Right cardiac atrium (tissue), 5 donors: ENCODE measurements at regions of chr1 and their contacts with region 1.

Region 1: DNA sequence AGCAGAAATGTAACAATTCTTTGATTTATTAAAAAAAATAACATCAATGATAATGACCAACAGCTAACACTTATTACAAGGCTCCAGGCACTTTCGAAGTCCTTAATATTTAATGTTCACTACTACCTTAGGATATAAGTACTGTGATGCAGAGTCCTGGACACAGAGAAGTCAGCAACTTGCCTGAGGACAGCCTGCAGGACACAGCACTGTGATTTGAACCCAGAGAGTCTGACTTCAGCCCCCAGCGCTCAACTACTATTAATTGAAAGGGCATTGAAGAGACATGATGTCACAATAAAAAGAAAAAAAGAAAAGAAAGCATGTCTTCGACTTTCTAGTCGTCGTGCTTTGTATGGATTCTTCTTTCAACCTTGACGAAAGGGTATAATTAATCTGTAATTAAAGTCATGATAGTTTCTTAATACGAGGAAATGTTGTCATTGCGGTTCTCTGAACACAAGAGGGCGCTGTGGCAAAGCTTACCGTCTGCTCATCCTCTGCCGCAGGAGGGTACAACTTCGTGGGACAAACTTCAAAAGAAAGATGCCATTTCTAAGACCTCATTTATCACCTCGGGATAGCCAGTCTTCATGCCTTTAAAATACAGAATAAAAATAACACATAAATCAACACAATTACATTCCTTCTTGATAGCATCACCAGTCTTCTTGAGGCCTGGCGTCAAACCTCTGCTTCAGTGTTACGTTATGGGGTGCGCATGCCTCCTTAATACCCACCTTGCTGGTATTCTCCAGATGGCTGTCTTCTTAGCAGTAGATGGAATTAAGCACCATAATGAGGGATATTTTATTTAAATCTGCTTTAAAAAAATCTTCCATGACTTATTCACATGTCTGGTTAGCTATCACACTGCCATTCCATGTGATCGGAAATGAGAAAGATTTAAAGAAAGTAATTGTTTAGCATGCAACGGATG is 240.1 kb downstream of the DISC1 start:
- DNase-seq: peak; percentile 50 to 73 (median 72)
- ATAC-seq: peak; percentile 32 to 54
- H3K4me3 ChIP-seq: no peak overlapping the region
- H3K27ac ChIP-seq: no peak overlapping the region
- H3K4me1 ChIP-seq: peaks cover 7% of the 10 kb centered on the region
- H3K27me3 ChIP-seq: no peaks in the 10 kb centered on the region

Region 2: DNA sequence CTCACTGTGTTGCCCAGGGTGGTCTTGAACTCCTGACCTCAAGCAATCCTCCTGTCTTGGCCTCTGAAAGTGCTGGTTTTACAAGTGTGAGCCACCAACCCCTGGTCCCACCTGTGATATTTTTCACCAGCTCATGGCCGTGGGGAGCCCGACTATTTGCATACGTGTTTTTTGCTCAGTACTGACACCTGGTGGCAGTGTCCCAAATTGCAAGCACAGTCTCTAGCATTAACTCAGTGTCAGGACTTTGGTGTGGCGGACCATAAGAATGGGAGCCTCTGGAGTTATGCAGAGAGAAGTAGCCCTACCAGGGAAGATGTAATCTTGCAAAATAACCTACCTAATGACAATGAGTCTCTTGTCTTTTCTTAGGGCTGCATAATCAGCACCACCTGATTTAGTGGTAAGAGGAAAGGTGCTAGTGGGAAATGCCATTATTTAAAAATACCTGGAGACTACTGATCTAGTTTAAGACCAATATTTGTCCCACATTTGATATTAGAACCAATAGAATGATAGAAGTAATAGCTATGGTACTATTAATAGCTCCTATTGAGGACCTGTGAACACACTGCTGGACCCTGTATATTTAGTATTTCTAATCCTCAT is 65.3 kb after region 1 on chr1:
- intact Hi-C with region 1: loop called in 2 of 4 experiments (anchors 10 kb)
- DNase-seq: no peak
- ATAC-seq: no peak
- H3K4me3 ChIP-seq: no peak overlapping the region
- H3K27ac ChIP-seq: no peak overlapping the region
- H3K4me1 ChIP-seq: peaks cover 44% of the 10 kb centered on the region
- H3K27me3 ChIP-seq: no peaks in the 10 kb centered on the region

Region 3: GRCh38 chr1:231986631-231987551 is 120.2 kb after region 1 on chr1:
- intact Hi-C with region 1: loop called in 1 of 4 experiments (anchors 10 kb)
- DNase-seq: peak in 2 of 3 donors; percentile 62 to 80
- ATAC-seq: peak; percentile 57 to 71
- H3K4me3 ChIP-seq: no peak overlapping the region
- H3K27ac ChIP-seq: peak overlapping the region; percentile 51
- H3K4me1 ChIP-seq: peaks cover 11% of the 10 kb centered on the region
- H3K27me3 ChIP-seq: no peaks in the 10 kb centered on the region

Region 4: DNA sequence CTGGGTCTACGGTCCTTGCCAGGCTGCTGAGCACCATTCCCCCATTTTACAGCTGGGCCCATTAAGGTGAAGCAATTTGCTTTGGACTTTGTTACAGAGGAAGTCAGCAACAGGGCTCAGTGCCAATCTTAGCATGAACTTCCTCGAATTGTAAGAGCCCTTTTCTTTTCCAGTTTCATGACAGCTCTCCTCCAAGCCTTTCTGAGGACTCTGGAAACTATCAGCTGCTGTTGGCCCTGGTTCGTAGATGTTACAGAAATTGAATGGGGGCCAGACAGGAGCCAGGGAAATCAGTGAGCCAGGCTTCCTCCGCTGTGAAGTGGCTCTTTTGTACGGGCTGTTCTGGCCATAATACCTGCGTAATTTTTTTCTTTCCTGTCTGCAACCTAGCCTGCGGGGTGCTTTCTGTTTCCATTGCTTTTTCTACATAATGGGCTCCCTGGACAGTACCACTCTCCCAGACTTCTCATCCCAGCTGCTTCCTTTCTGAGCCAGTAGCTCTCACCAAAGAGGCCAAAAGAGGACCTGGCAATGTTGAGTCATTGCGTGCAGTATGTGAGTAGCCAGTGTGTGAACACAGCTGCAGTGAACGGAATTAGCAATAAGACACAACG is 146.2 kb after region 1 on chr1:
- intact Hi-C with region 1: loop called in 1 of 4 experiments (anchors 10 kb)
- DNase-seq: peak; percentile 59 to 63 (median 63)
- ATAC-seq: peak; percentile 89 to 96
- H3K4me3 ChIP-seq: peak overlapping the region; percentile 25
- H3K27ac ChIP-seq: peak overlapping the region; percentile 94
- H3K4me1 ChIP-seq: peaks cover 6% of the 10 kb centered on the region
- H3K27me3 ChIP-seq: no peaks in the 10 kb centered on the region

Region 5: DNA sequence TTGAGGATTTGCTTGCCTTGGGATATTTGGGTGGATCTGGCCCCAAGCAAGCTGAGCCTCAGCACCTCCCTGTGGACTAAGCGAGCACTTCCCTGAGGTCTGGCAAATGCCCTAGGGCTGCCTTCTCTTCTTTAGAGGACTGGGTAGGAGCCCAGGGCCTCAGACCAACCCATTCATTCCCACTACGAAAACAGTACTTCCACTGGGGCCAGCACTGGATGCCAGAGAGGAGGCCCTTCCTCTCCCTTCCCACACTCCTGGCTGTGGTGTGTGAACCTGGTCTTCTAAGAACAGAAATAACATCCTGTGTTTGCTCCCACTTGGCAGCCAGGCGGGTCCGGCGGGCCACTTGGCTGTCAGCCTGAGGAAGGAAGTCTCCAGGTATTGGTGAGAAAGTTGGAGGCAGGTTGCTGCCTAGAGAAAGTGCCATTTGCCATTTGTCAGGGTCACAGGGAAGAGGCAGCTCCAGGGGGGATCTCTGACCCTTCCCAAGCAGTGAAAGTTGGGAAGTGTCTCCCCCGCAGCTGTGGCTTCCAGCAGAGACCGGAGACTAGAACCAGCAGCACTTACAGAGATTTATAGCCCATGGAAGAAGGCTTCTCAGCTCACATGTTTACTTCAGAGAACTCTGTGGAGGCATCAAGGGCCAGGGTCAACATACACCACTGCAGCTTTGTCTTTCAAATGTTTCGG is 439.8 kb after region 1 on chr1:
- intact Hi-C with region 1: loop called in 3 of 4 experiments (anchors 10 kb)
- DNase-seq: peak; percentile 43 to 80 (median 78)
- ATAC-seq: peak; percentile 87 to 96
- H3K4me3 ChIP-seq: no peak overlapping the region
- H3K27ac ChIP-seq: peak overlapping the region; percentile 4
- H3K4me1 ChIP-seq: peaks cover 3% of the 10 kb centered on the region
- H3K27me3 ChIP-seq: no peaks in the 10 kb centered on the region

Region 6: GRCh38 chr1:232319072-232319471 is 452.4 kb after region 1 on chr1:
- intact Hi-C with region 1: loop called in 1 of 4 experiments (anchors 10 kb)
- DNase-seq: peak; percentile 78 to 93 (median 90)
- ATAC-seq: peak; percentile 93
- H3K4me3 ChIP-seq: no peak overlapping the region
- H3K27ac ChIP-seq: peak overlapping the region; percentile 96
- H3K4me1 ChIP-seq: no peaks in the 10 kb centered on the region
- H3K27me3 ChIP-seq: no peaks in the 10 kb centered on the region